Body of pancreas (tissue), 4 donors: ENCODE measurements at regions of chr22 and their contacts with region 1.

Region 1: GRCh38 chr22:24768537-24769374 is 5.8 kb downstream of the PIWIL3 start:
- DNase-seq: peak; percentile 83 to 90 (median 86)
- ATAC-seq: peak; percentile 79
- H3K4me3 ChIP-seq: no peak overlapping the region
- H3K27ac ChIP-seq: no peak overlapping the region
- H3K4me1 ChIP-seq: no peaks in the 10 kb centered on the region
- H3K27me3 ChIP-seq: no peaks in the 10 kb centered on the region
- CTCF ChIP-seq: peak; percentile 37 to 92 (median 82)
- POLR2A ChIP-seq: no peak

Region 2: GRCh38 chr22:24542641-24543040 is 226.1 kb before region 1 on chr22:
- intact Hi-C with region 1: no loop called
- DNase-seq: peak; percentile 63 to 83 (median 72)
- ATAC-seq: peak; percentile 70
- H3K4me3 ChIP-seq: no peak overlapping the region
- H3K27ac ChIP-seq: peak overlapping the region in 3 of 4 donors; percentile 11 to 48 (median 24)
- H3K4me1 ChIP-seq: peaks cover 41% of the 10 kb centered on the region
- H3K27me3 ChIP-seq: no peaks in the 10 kb centered on the region
- CTCF ChIP-seq: peak in 4 of 7 experiments; percentile 33 to 42 (median 38)
- POLR2A ChIP-seq: no peak

Region 3: GRCh38 chr22:24848559-24849168 is 79.9 kb after region 1 on chr22:
- intact Hi-C with region 1: loop called (anchors 2 kb)
- DNase-seq: peak in 3 of 4 donors; percentile 57 to 71 (median 65)
- ATAC-seq: peak; percentile 84
- H3K4me3 ChIP-seq: no peak overlapping the region
- H3K27ac ChIP-seq: peak overlapping the region in 2 of 4 donors; percentile 22 to 43
- H3K4me1 ChIP-seq: peaks cover 27% of the 10 kb centered on the region
- H3K27me3 ChIP-seq: no peaks in the 10 kb centered on the region
- CTCF ChIP-seq: peak in 4 of 7 experiments; percentile 31 to 52 (median 41)
- POLR2A ChIP-seq: no peak

Region 4: GRCh38 chr22:25057013-25057881 is 288.5 kb after region 1 on chr22:
- intact Hi-C with region 1: loop called (anchors 10 kb)
- DNase-seq: peak; percentile 65 to 83 (median 72)
- ATAC-seq: peak; percentile 75
- H3K4me3 ChIP-seq: no peak overlapping the region
- H3K27ac ChIP-seq: no peak overlapping the region
- H3K4me1 ChIP-seq: peaks cover 14% of the 10 kb centered on the region
- H3K27me3 ChIP-seq: no peaks in the 10 kb centered on the region
- CTCF ChIP-seq: peak; percentile 70 to 91 (median 77)
- POLR2A ChIP-seq: no peak